ENCODE measurements at regions of chr3 and their contacts with region 1.

Region 1: DNA sequence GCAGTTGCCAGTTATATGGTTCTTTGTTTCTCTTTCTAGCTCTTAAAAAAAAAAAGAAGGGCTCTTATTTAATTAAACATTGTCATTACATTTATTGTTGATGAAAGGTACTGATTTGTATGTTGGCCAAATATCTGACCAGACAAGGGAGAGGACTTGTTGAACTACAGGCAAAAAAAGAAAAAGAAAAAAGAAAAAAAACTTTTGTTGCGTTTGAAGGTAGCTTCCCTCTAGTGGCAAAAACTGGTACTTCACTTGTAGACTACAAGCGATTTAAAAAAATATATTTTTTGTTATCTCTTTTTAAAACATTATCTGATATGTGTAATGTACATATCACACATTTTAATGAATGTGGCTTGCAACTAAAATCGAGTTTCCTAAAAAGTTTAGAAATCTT is 280.6 kb downstream of the ROBO2 start:
- DNase-seq: peak; percentile 46
- H3K4me3 ChIP-seq: no peak overlapping the region
- H3K27ac ChIP-seq: peak overlapping the region; percentile 42
- H3K4me1 ChIP-seq: peaks cover 8% of the 10 kb centered on the region
- H3K27me3 ChIP-seq: no peaks in the 10 kb centered on the region
- CTCF ChIP-seq: peak; percentile 63

Region 2: GRCh38 chr3:77420336-77420735 is 99.8 kb after region 1 on chr3:
- CTCF ChIA-PET with region 1: no interaction called
- POLR2A ChIA-PET with region 1: no interaction called
- intact Hi-C with region 1: loop called (anchors 10 kb)
- DNase-seq: no peak
- H3K4me3 ChIP-seq: no peak overlapping the region
- H3K27ac ChIP-seq: no peak overlapping the region
- H3K4me1 ChIP-seq: peaks cover 28% of the 10 kb centered on the region
- H3K27me3 ChIP-seq: no peaks in the 10 kb centered on the region
- CTCF ChIP-seq: no peak

Measured in A673 (cell line).